IMR-90 (cell line): ENCODE measurements at regions of chr13 and their contacts with region 1.

Region 1: DNA sequence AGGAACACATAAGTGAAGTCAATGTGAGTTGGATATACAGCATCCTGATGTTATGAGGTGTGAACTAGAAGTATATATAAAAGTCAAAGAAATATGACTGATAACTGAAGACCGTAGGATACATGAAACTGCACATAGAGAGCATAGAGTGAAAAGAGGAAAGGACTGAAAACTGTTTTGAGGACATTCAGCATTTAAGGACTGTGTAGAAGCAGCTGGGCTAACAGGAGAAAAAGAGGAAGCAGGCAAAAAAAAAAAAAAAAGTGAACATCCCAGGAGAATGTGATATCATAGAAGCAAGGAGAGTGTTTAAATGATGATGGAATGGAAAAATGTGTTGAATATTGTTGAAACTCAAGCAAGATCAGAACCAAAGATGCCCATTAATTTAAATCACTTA is 363.5 kb downstream of the PCDH20 start:
- DNase-seq: no peak
- ATAC-seq: no peak
- H3K4me3 ChIP-seq: no peak overlapping the region
- H3K27ac ChIP-seq: no peak overlapping the region
- H3K4me1 ChIP-seq: no peaks in the 10 kb centered on the region
- H3K27me3 ChIP-seq: no peaks in the 10 kb centered on the region
- CTCF ChIP-seq: no peak
- POLR2A ChIP-seq: no peak
- RAD21 ChIP-seq: no peak

Region 2: DNA sequence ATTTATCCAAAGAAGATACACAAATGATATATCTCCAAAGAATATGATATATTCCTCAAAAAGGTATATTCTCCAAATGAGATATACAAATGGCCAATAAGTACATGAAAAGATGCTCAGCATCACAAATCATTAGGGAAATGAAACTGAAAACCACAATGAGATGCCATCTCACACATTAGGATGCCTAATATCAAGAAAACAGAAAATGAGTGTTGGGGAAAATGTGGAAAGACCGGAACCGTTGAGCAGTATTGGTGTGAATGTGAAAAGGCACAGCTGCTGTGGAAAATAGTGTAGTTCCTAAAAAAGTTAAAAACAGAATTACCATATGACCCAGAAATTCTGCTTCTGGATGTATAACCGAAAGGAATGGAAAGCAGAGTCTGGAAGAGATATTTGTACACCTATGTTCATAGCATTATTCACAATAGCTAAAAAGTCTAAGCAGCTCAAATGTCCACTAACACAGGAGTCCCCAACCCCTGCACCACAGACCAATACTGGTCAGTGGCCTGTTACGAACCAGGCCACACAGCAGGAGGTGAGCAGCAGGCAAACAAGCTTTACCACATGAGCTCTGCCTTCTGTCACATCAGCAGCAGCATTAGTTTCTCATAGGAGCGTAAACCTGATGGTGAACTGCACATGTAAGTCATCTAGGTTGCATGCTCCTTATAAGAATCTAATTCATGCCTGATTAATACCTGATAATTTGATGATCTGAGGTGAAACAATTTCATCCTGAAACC is 71.5 kb after region 1 on chr13:
- CTCF ChIA-PET with region 1: no interaction called
- POLR2A ChIA-PET with region 1: no interaction called
- dilution Hi-C with region 1: no loop called
- in situ Hi-C with region 1: no loop called
- intact Hi-C with region 1: loop called (anchors 2 kb)
- DNase-seq: no peak
- ATAC-seq: no peak
- H3K4me3 ChIP-seq: no peak overlapping the region
- H3K27ac ChIP-seq: no peak overlapping the region
- H3K4me1 ChIP-seq: no peaks in the 10 kb centered on the region
- H3K27me3 ChIP-seq: no peaks in the 10 kb centered on the region
- CTCF ChIP-seq: no peak
- POLR2A ChIP-seq: no peak
- RAD21 ChIP-seq: no peak